Mammary epithelial cell (primary cell): ENCODE measurements at regions of chr10 and their contacts with region 1.

Region 1: DNA sequence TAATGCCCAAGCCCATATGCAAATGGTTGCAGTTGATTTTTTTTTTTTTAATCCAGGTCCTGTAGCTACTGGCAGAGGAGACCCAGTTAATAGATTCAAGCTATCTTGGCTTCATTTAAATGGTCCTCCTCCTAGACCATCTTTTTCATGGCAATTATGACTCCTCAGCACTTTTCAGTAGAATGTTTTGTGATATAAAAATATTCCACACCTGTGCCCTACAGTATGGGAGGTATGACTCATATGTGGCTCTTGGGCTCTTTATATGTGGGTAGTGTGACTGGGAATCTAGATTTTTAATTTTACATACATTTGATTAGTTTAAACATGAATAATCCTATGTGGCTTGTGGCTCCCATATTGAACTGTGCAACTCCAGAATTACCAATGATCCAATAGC is 80.1 kb downstream of the ITGB1 start:
- DNase-seq: no peak
- H3K4me3 ChIP-seq: no peak overlapping the region
- H3K27ac ChIP-seq: no peak overlapping the region
- H3K4me1 ChIP-seq: no peaks in the 10 kb centered on the region
- H3K27me3 ChIP-seq: no peaks in the 10 kb centered on the region
- CTCF ChIP-seq: no peak

Region 2: DNA sequence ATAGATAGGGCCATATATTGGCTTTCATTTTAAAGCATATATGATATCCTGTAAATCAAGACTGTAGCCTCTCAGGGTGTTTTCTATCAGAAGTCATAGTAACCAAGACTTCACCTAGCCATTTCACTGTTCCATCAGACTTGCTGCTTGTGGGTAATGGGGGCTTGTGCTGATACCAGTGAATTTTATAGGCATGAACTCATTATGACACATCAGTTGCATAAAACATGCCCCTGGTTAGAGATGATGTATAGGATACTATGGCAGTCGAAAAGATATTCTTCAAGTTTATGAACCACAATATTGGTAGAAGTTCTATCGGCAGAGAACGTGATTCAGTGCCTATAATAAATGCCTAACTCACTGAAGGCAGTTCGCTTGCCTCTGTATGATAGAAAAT is 126.3 kb before region 1 on chr10:
- CTCF ChIA-PET with region 1: no interaction called
- dilution Hi-C with region 1: no loop called
- in situ Hi-C with region 1: no loop called
- intact Hi-C with region 1: no loop called
- DNase-seq: no peak
- H3K4me3 ChIP-seq: no peak overlapping the region
- H3K27ac ChIP-seq: no peak overlapping the region
- H3K4me1 ChIP-seq: no peaks in the 10 kb centered on the region
- H3K27me3 ChIP-seq: no peaks in the 10 kb centered on the region
- CTCF ChIP-seq: no peak

Region 3: DNA sequence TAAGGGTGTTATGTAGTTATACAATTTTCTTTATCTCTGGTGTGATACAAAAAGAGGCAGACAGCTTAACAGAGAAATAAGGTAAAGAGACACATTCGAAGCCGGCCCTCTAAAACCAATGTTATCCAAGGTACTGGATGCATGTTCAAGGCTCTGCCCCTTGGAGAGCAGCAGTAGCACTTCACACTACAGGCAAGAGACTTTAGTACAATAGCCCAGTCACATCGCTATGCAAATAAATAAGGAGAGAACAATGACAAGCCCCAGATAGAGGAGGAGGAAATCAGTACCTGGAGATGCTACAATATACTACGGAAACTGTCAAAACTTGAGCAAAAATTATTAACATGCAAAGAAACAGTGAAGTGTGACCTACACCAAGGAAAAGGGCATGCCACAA is 30.9 kb before region 1 on chr10:
- CTCF ChIA-PET with region 1: no interaction called
- dilution Hi-C with region 1: no loop called
- in situ Hi-C with region 1: no loop called
- intact Hi-C with region 1: loop called (anchors 5 kb)
- DNase-seq: no peak
- H3K4me3 ChIP-seq: no peak overlapping the region
- H3K27ac ChIP-seq: no peak overlapping the region
- H3K4me1 ChIP-seq: no peaks in the 10 kb centered on the region
- H3K27me3 ChIP-seq: no peaks in the 10 kb centered on the region
- CTCF ChIP-seq: no peak

Region 4: DNA sequence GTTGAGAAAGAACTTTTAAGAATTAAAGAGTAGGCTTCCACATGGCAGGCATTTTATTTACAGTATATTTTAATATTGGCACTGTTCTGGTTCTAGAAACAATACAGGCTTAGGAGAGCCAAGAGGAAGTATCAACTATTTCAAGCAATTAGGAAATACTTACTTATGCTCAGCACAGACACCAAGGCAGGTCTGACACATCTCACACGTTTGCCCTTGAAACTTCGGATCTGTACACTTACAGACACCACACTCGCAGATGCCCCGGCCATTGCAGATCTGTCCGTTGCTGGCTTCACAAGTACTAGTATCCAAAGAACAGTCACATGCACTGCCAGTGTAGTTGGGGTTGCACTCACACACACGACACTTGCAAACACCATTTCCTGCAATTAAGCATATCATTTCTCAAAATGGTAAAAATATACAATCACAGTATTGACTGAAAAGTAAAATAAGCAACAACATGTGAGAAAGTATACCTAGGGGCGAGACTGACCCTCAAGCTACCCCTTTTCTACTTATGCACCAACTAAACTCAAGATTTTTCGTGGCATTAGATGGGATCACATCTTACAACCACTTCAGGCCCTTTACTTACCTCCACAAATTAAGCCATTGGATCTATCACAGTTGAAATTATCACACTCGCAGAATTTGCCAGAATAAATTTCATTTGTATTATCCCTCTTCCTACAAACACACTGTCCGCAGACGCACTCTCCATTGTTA is 33.5 kb after region 1 on chr10:
- CTCF ChIA-PET with region 1: no interaction called
- dilution Hi-C with region 1: no loop called
- in situ Hi-C with region 1: no loop called
- intact Hi-C with region 1: no loop called
- DNase-seq: no peak
- H3K4me3 ChIP-seq: no peak overlapping the region
- H3K27ac ChIP-seq: no peak overlapping the region
- H3K4me1 ChIP-seq: peaks cover 7% of the 10 kb centered on the region
- H3K27me3 ChIP-seq: no peaks in the 10 kb centered on the region
- CTCF ChIP-seq: no peak